ENCODE measurements at regions of chr20 and their contacts with region 1.

Region 1: GRCh38 chr20:48295445-48295963 is 510.2 kb upstream of the SULF2 start:
- DNase-seq: peak; percentile 88
- H3K4me3 ChIP-seq: no peak overlapping the region
- H3K27ac ChIP-seq: no peak overlapping the region
- H3K4me1 ChIP-seq: peaks cover 31% of the 10 kb centered on the region
- H3K27me3 ChIP-seq: no peaks in the 10 kb centered on the region
- CTCF ChIP-seq: peak; percentile 64 to 66

Region 2: GRCh38 chr20:47663333-47664067 is 632.0 kb before region 1 on chr20:
- CTCF ChIA-PET with region 1: no interaction called
- dilution Hi-C with region 1: no loop called
- in situ Hi-C with region 1: no loop called
- intact Hi-C with region 1: loop called (anchors 1 kb)
- DNase-seq: peak; percentile 67
- H3K4me3 ChIP-seq: no peak overlapping the region
- H3K27ac ChIP-seq: no peak overlapping the region
- H3K4me1 ChIP-seq: peaks cover 24% of the 10 kb centered on the region
- H3K27me3 ChIP-seq: no peaks in the 10 kb centered on the region
- CTCF ChIP-seq: peak; percentile 92 to 95

Region 3: DNA sequence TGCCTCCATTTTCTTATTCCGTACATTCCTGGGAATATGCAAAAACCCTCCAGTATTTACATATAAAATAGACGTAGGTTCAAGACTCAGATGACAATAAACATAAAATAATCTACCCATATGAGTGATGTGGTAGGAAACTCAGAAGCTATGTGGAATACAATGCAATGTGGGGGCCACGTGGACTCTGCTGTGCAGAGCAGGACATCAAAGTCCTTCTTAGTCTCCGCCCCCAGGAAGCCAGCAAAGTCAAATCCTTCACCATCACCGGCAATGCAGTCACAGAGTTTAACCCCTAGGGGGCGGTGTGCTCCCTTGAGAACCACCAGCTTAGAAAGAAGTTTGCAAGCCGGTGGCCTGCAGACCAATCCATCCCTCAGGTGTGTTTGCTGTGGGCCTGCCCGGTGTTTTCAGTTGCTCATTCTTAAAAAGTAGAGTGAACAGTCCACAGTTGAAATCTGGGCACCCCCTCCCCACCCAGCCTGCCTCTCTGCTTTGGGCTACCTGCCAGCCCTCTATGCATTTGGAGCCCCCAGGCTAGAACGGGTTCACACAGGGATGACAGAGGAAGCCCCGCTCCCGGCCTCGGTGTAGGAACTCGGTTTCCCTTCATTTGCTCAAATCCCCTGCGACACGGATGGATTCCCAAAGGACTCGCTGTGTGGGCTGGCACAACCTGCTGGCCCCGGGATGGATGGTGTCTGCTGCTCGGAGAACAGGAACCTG is 570.1 kb before region 1 on chr20:
- CTCF ChIA-PET with region 1: no interaction called
- dilution Hi-C with region 1: no loop called
- in situ Hi-C with region 1: no loop called
- intact Hi-C with region 1: loop called (anchors 1 kb)
- DNase-seq: peak; percentile 76
- H3K4me3 ChIP-seq: no peak overlapping the region
- H3K27ac ChIP-seq: no peak overlapping the region
- H3K4me1 ChIP-seq: no peaks in the 10 kb centered on the region
- H3K27me3 ChIP-seq: no peaks in the 10 kb centered on the region
- CTCF ChIP-seq: peak; percentile 92 to 95

Region 4: GRCh38 chr20:47854163-47854562 is 441.3 kb before region 1 on chr20:
- CTCF ChIA-PET with region 1: interaction called, 4 read pairs
- dilution Hi-C with region 1: no loop called
- in situ Hi-C with region 1: no loop called
- intact Hi-C with region 1: loop called (anchors 1 kb)
- DNase-seq: no peak
- H3K4me3 ChIP-seq: no peak overlapping the region
- H3K27ac ChIP-seq: no peak overlapping the region
- H3K4me1 ChIP-seq: no peaks in the 10 kb centered on the region
- H3K27me3 ChIP-seq: no peaks in the 10 kb centered on the region
- CTCF ChIP-seq: no peak

Measured in mammary epithelial cell (primary cell).